Mucosa of descending colon (tissue), 3 donors: ENCODE measurements at regions of chr12 and their contacts with region 1.

Region 1: DNA sequence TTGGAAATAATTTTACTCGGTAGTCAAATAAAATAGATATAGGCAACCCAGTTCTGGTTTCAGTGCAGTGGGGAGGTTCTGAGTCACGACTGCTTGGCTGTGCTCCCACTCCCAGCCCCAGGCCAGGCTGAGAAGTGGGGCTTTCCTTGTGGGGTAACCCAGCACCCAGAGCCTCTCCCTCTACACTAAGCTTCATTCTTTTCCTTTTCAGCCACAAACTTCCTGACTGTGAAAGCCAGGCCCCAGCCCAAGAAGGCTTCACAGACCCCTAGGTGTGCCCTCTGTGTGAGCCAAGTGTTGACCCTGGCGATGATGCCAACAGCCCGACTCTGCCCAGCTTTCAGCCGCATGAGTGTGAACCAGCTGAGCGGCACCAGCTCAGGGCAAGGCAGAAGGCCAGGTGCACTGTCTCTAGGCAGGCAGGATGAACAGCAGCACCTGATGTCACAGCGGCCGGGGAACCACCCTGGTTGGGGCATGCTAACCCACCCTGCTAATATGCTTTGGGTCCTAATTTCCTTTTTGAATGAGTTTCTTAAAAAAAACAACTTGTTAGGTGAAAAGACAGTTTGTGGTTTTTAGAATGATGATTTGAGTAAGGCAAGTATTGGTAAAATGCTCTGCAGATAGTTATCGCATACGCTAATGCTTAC is 42.2 kb upstream of the ATP23 start:
- DNase-seq: peak in 2 of 3 donors; percentile 55 to 79
- ATAC-seq: peak; percentile 47
- H3K4me3 ChIP-seq: no peak overlapping the region
- H3K4me1 ChIP-seq: peaks cover 43% of the 10 kb centered on the region
- CTCF ChIP-seq: no peak

Region 2: GRCh38 chr12:57693659-57694458 is 205.3 kb before region 1 on chr12 and contains the start of gene OS9:
- intact Hi-C with region 1: no loop called
- DNase-seq: peak; percentile 90 to 98 (median 94)
- ATAC-seq: peak; percentile 98
- H3K4me3 ChIP-seq: peak within 1 kb of the TSS; percentile 61
- H3K4me1 ChIP-seq: peaks cover 9% of the 10 kb centered on the region
- CTCF ChIP-seq: peak; percentile 86
- total RNA-seq, gene OS9: 230 to 282 (median 282) TPM

Region 3: GRCh38 chr12:57815177-57816000 is 83.7 kb before region 1 on chr12:
- intact Hi-C with region 1: no loop called
- DNase-seq: no peak
- ATAC-seq: peak; percentile 34
- H3K4me3 ChIP-seq: no peak overlapping the region
- H3K4me1 ChIP-seq: peaks cover 16% of the 10 kb centered on the region
- CTCF ChIP-seq: no peak

Region 4: GRCh38 chr12:57836442-57837375 is 62.4 kb before region 1 on chr12:
- intact Hi-C with region 1: loop called in 1 of 2 experiments (anchors 5 kb)
- DNase-seq: peak; percentile 68 to 76 (median 69)
- ATAC-seq: peak; percentile 62
- H3K4me3 ChIP-seq: no peak overlapping the region
- H3K4me1 ChIP-seq: peaks cover 93% of the 10 kb centered on the region
- CTCF ChIP-seq: no peak

Region 5: GRCh38 chr12:57852620-57853500 is 46.3 kb before region 1 on chr12:
- intact Hi-C with region 1: no loop called
- DNase-seq: peak in 1 of 3 donors; percentile 39
- ATAC-seq: peak; percentile 28
- H3K4me3 ChIP-seq: no peak overlapping the region
- H3K4me1 ChIP-seq: peaks cover 5% of the 10 kb centered on the region
- CTCF ChIP-seq: no peak